Activated B cell treated with CpG ODN at 0.5 μM for 24 hours (primary cell): ENCODE measurements at regions of chr9 and their contacts with region 1.

Region 1: GRCh38 chr9:22405869-22406659 is 40.6 kb upstream of the DMRTA1 start:
- DNase-seq: no peak
- ATAC-seq: no peak
- H3K4me3 Mint-ChIP-seq: no peak overlapping the region
- H3K27ac Mint-ChIP-seq: no peak overlapping the region
- H3K4me1 Mint-ChIP-seq: no peaks in the 10 kb centered on the region
- H3K27me3 Mint-ChIP-seq: peaks cover 4% of the 10 kb centered on the region
- CTCF ChIP-seq: no peak

Region 2: DNA sequence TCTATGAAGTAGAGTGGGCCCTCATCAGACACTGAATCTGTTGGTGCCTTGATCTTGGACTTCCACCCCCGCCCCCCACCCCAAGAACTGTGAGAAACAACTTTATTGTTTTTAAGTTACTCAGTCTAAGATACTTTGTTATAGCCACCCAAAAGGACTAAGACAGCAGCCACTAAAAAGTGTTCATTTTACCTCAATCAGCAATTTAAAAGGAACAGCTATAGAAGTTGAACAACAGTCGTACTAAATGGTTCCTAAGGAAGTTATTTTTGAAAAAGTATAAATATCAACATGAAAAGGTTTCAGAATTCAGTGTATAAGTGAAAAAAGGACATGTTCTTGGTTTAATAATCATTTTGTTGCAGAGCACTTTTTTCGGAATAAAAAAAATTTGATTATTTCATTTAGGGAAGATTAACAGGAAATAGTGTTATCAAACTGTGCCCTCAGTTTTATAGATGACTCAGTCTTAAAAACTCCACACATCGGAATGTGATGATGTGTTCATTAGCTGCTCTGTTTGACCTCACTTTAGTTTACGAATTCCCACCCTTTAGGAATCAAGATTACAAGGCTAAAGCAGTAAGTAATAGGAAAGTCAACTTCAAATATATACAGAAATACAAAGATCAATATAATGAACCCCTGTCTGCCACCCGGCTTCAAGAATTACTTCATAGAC is 532.4 kb before region 1 on chr9:
- CTCF ChIA-PET with region 1: no interaction called
- POLR2A ChIA-PET with region 1: no interaction called
- intact Hi-C with region 1: no loop called
- DNase-seq: no peak
- ATAC-seq: no peak
- H3K4me3 Mint-ChIP-seq: no peak overlapping the region
- H3K27ac Mint-ChIP-seq: no peak overlapping the region
- H3K4me1 Mint-ChIP-seq: peaks cover 3% of the 10 kb centered on the region
- H3K27me3 Mint-ChIP-seq: no peaks in the 10 kb centered on the region
- CTCF ChIP-seq: no peak

Region 3: DNA sequence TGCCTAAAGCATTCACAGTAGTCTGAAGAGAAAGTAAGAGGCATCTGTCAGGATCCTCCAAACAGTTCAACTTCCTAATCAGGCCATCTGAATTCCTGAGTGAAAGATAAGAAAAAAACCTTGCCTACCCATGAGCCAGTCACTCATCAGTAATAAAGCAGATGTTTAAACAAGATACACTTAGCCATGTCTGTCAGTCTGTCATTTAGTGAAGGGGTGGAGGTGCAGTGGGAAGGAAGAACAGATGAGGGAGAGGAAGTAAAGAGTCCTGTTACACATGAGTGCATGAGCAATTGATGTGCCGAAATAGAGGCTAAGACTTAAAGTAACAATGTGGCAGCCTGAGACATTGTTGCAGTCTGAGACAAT is 10.6 kb after region 1 on chr9:
- CTCF ChIA-PET with region 1: no interaction called
- POLR2A ChIA-PET with region 1: no interaction called
- intact Hi-C with region 1: loop called (anchors 1 kb)
- DNase-seq: no peak
- ATAC-seq: no peak
- H3K4me3 Mint-ChIP-seq: no peak overlapping the region
- H3K27ac Mint-ChIP-seq: no peak overlapping the region
- H3K4me1 Mint-ChIP-seq: no peaks in the 10 kb centered on the region
- H3K27me3 Mint-ChIP-seq: no peaks in the 10 kb centered on the region
- CTCF ChIP-seq: no peak